ENCODE measurements at regions of chr1 and their contacts with region 1.

Region 1: GRCh38 chr1:206489980-206490770 is 17.2 kb upstream of the RASSF5 start:
- DNase-seq: peak; percentile 91
- ATAC-seq: peak; percentile 95
- H3K4me3 Mint-ChIP-seq: no peak overlapping the region
- H3K27ac Mint-ChIP-seq: no peak overlapping the region
- H3K4me1 Mint-ChIP-seq: no peaks in the 10 kb centered on the region
- H3K27me3 Mint-ChIP-seq: no peaks in the 10 kb centered on the region
- CTCF ChIP-seq: peak; percentile 94

Region 2: GRCh38 chr1:206469933-206470691 is 20.1 kb before region 1 on chr1 and contains the start of gene IKBKE:
- CTCF ChIA-PET with region 1: interaction called, 28 read pairs
- POLR2A ChIA-PET with region 1: interaction called, 3 read pairs
- DNase-seq: peak; percentile 41
- ATAC-seq: peak; percentile 64
- H3K4me3 Mint-ChIP-seq: peak within 1 kb of the TSS; percentile 69
- H3K27ac Mint-ChIP-seq: peak within 1 kb of the TSS; percentile 41; the same call in 1 of the 2 replicates
- H3K4me1 Mint-ChIP-seq: peaks cover 59% of the 10 kb centered on the region
- H3K27me3 Mint-ChIP-seq: peaks cover 16% of the 10 kb centered on the region
- CTCF ChIP-seq: no peak
- total RNA-seq, gene IKBKE: 7.8 to 8.1 TPM (median 8.0 TPM) in 3 replicates

Region 3: GRCh38 chr1:206507284-206508129 is 17.3 kb after region 1 on chr1 and contains the start of gene RASSF5:
- CTCF ChIA-PET with region 1: interaction called, 34 read pairs
- POLR2A ChIA-PET with region 1: no interaction called
- DNase-seq: peak; percentile 87
- ATAC-seq: peak; percentile 87
- H3K4me3 Mint-ChIP-seq: peak within 1 kb of the TSS; percentile 68
- H3K27ac Mint-ChIP-seq: no peak within 1 kb of the TSS
- H3K4me1 Mint-ChIP-seq: peaks cover 25% of the 10 kb centered on the region
- H3K27me3 Mint-ChIP-seq: peaks cover 76% of the 10 kb centered on the region
- CTCF ChIP-seq: no peak
- total RNA-seq, gene RASSF5: 1.7 to 2.1 TPM (median 1.7 TPM) in 3 replicates

Region 4: DNA sequence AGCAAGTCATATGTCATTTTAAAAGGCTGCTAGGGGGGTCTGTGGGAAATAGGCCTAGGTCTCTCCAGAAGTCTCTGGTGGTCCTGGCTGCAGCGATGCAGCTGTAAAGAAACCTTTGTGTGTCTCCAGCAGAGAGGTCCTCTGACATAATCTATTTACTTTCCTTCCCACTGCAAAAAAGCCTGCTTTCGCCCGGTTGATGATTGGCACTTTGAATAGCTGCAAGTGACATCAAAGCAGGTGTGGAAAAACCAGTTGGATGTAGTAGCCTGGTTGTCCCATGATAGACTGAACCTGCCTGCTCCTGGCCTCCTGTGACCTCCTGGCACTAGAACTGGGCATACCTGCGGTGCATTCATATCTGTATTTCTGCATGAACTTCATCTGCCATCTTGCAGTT is 31.0 kb after region 1 on chr1:
- CTCF ChIA-PET with region 1: interaction called, 10 read pairs
- POLR2A ChIA-PET with region 1: no interaction called
- DNase-seq: no peak
- ATAC-seq: no peak
- H3K4me3 Mint-ChIP-seq: no peak overlapping the region
- H3K27ac Mint-ChIP-seq: no peak overlapping the region
- H3K4me1 Mint-ChIP-seq: 0 out of 2 replicates have a peak, but pooled peaks cover 3% of the 10 kb centered on the region
- H3K27me3 Mint-ChIP-seq: no peaks in the 10 kb centered on the region
- CTCF ChIP-seq: no peak

Region 5: GRCh38 chr1:206556750-206557635 is 66.8 kb after region 1 on chr1:
- CTCF ChIA-PET with region 1: interaction called, 12 read pairs
- POLR2A ChIA-PET with region 1: no interaction called
- DNase-seq: peak; percentile 73
- ATAC-seq: peak; percentile 83
- H3K4me3 Mint-ChIP-seq: peak overlapping the region; percentile 70
- H3K27ac Mint-ChIP-seq: no peak overlapping the region
- H3K4me1 Mint-ChIP-seq: peaks cover 35% of the 10 kb centered on the region
- H3K27me3 Mint-ChIP-seq: peaks cover 36% of the 10 kb centered on the region
- CTCF ChIP-seq: no peak

Region 6: DNA sequence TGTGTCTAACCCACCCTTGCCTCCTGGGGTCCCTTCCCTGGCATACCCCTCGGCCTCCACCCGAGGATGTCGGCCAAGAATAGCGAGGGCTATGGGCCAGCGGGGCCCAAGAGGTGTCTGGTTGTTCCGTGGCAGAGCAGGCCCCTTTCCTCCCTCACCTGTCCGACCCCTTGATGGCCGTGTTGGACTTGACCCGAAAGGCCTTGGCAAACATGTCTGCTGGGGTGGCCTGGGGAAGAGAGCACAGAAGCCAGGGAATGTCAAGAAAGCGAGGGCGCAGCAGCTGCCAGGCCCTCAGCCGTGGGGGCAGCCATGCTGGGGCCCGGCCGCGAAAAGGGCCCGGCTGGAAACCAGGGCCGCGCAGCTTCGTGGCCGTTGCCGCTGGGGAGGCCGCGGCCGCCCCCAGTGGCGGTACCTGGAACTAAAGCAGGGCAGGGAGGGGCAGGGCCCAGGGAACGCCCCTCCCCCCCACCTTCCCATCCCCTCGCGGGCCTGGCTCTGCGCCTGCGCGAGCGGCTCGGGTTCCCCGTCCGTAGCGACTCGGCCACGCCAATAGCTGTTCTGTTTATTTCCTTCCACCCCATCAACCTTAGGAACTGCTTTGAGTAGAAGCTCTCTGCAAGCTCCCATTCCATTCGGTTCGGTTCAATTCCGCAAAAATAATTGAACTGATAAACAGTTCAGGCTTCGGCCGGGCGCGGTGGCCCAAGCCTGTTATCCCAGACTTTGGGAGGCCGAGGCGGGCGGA is 122.1 kb after region 1 on chr1 and contains the start of gene EIF2D:
- CTCF ChIA-PET with region 1: interaction called, 10 read pairs
- POLR2A ChIA-PET with region 1: no interaction called
- DNase-seq: peak; percentile 95
- ATAC-seq: peak; percentile 98
- H3K4me3 Mint-ChIP-seq: peak within 1 kb of the TSS; percentile 94
- H3K27ac Mint-ChIP-seq: peak within 1 kb of the TSS; percentile 97
- H3K4me1 Mint-ChIP-seq: peaks cover 12% of the 10 kb centered on the region
- H3K27me3 Mint-ChIP-seq: peaks cover 7% of the 10 kb centered on the region
- CTCF ChIP-seq: peak; percentile 88
- total RNA-seq, gene EIF2D: 35.7 to 36.8 TPM (median 35.9 TPM) in 3 replicates